ENCODE measurements at regions of chrX and their contacts with region 1.

Region 1: DNA sequence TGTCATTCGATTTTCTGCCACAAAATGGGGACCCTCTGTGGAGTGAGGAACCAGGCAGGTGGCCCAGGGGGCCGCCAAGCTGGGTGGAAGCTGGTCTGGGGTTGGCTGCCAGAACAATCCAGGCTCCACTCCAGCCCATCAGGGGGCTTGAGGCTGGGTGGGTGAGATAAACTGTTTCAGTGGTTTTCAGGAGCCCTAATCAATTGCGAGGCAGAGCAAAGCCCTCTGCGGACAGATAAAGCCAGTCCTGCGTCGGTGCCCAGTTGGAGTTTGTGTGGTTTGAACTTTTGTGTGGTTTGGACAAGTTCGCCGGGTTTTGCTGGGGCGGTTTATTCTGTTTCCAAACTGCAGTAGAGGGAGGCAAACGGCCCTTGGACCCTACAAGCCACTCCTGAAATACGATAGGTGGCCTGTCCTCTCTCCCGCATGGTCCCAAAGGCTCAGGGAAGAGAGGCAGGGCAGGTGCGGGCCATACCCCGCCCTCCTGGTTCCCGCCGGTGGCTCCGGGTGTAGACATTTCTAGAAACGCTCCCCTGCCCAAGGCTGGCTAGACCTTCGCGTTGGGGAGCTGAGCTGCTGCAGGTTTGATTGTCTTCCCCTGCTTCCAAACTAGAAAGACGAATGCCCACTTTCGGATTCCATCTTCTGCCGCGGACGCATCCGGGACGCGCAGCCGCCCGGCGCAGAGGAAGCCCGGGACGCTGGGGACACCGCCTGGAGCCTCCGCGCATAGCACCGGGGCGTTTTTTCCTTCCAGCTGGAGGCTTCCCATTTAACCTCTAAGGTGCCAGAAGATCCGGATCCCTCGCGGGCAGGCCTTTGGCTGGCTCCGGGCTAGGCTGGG is 169.0 kb upstream of the BCOR start:
- DNase-seq: peak; percentile 44
- H3K4me3 Mint-ChIP-seq: peak overlapping the region; percentile 54
- H3K27ac Mint-ChIP-seq: no peak overlapping the region
- H3K4me1 Mint-ChIP-seq: peaks cover 7% of the 10 kb centered on the region
- H3K27me3 Mint-ChIP-seq: peaks cover 11% of the 10 kb centered on the region
- CTCF ChIP-seq: peak; percentile 57

Region 2: GRCh38 chrX:39261446-39262147 is 1005.1 kb before region 1 on chrX:
- CTCF ChIA-PET with region 1: no interaction called
- POLR2A ChIA-PET with region 1: interaction called, 3 read pairs
- intact Hi-C with region 1: loop called (anchors 5 kb)
- DNase-seq: peak; percentile 69
- H3K4me3 Mint-ChIP-seq: no peak overlapping the region
- H3K27ac Mint-ChIP-seq: no peak overlapping the region
- H3K4me1 Mint-ChIP-seq: peaks cover 5% of the 10 kb centered on the region
- H3K27me3 Mint-ChIP-seq: peaks cover under 1% of the 10 kb centered on the region
- CTCF ChIP-seq: peak; percentile 61

Region 3: DNA sequence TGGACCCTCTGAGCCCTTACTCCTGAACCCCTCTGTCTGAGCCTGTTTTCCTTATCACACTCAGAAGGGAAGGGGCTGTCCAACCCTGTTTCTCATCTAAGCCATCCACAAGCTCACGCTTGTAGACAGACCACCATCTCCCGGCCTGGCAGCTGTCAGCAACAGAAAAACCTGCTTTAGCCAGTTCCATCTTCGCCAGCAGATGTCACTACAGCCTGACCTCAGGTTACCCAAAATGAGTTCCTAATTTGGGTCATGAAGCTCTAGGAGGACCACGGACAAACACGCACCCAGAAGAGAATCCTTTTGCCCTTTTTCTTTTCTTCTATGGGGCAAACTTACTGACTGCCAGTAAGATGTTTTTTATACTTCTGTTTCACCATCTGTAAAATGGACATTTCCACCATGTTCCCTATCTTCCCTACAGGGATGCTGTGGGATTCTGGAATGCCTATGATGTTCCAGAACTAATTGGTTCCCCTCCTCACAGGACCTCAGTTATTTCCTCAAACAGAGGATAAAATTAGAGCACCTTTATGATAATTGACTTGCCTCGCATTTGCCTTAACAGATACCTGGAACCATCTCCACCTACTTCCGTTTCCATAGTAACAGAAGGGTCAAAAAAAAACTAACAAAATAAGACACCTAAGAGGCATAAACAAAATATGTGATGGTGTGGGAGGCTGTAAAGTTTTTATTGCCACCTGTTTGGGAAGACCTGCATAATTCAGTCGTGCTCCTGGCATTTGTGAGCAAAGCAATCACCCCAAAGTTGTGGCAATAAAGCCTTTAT is 614.2 kb before region 1 on chrX:
- CTCF ChIA-PET with region 1: no interaction called
- POLR2A ChIA-PET with region 1: no interaction called
- intact Hi-C with region 1: loop called (anchors 2 kb)
- DNase-seq: peak; percentile 40
- H3K4me3 Mint-ChIP-seq: no peak overlapping the region
- H3K27ac Mint-ChIP-seq: no peak overlapping the region
- H3K4me1 Mint-ChIP-seq: no peaks in the 10 kb centered on the region
- H3K27me3 Mint-ChIP-seq: peaks cover 65% of the 10 kb centered on the region
- CTCF ChIP-seq: peak; percentile 38

Region 4: GRCh38 chrX:39796856-39797255 is 469.9 kb before region 1 on chrX:
- CTCF ChIA-PET with region 1: no interaction called
- POLR2A ChIA-PET with region 1: no interaction called
- intact Hi-C with region 1: no loop called
- DNase-seq: peak; percentile 11
- H3K4me3 Mint-ChIP-seq: no peak overlapping the region
- H3K27ac Mint-ChIP-seq: no peak overlapping the region
- H3K4me1 Mint-ChIP-seq: no peaks in the 10 kb centered on the region
- H3K27me3 Mint-ChIP-seq: peaks cover 56% of the 10 kb centered on the region
- CTCF ChIP-seq: no peak

Region 5: DNA sequence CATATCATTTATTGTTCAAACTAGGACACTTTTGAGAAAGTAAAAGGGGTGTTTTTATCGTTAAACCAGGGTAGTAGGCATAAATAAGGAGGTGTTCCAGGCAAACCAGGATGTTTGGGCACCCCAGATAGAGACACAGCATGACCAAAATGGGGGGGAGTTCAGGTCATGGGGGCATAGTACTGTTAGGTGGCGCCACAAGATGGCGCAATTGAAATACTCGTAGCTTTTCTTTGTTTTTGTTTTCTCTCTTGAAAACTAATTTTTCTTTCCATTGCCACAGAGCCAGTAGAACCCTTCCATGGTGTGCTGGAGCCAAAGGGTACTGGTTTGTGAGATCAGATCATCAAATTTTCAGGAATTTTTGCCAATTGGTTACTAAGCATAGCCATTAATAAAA is 452.3 kb before region 1 on chrX:
- CTCF ChIA-PET with region 1: no interaction called
- POLR2A ChIA-PET with region 1: no interaction called
- intact Hi-C with region 1: loop called (anchors 1 kb)
- DNase-seq: peak; percentile 51
- H3K4me3 Mint-ChIP-seq: no peak overlapping the region
- H3K27ac Mint-ChIP-seq: peak overlapping the region; percentile 4
- H3K4me1 Mint-ChIP-seq: peaks cover 15% of the 10 kb centered on the region
- H3K27me3 Mint-ChIP-seq: peaks cover 58% of the 10 kb centered on the region
- CTCF ChIP-seq: peak; percentile 45

Region 6: GRCh38 chrX:40108959-40109287 is 157.8 kb before region 1 on chrX:
- CTCF ChIA-PET with region 1: no interaction called
- POLR2A ChIA-PET with region 1: no interaction called
- intact Hi-C with region 1: loop called (anchors 10 kb)
- DNase-seq: peak; percentile 76
- H3K4me3 Mint-ChIP-seq: peak overlapping the region; percentile 46
- H3K27ac Mint-ChIP-seq: no peak overlapping the region
- H3K4me1 Mint-ChIP-seq: peaks cover 5% of the 10 kb centered on the region
- H3K27me3 Mint-ChIP-seq: peaks cover 26% of the 10 kb centered on the region
- CTCF ChIP-seq: no peak

Region 7: DNA sequence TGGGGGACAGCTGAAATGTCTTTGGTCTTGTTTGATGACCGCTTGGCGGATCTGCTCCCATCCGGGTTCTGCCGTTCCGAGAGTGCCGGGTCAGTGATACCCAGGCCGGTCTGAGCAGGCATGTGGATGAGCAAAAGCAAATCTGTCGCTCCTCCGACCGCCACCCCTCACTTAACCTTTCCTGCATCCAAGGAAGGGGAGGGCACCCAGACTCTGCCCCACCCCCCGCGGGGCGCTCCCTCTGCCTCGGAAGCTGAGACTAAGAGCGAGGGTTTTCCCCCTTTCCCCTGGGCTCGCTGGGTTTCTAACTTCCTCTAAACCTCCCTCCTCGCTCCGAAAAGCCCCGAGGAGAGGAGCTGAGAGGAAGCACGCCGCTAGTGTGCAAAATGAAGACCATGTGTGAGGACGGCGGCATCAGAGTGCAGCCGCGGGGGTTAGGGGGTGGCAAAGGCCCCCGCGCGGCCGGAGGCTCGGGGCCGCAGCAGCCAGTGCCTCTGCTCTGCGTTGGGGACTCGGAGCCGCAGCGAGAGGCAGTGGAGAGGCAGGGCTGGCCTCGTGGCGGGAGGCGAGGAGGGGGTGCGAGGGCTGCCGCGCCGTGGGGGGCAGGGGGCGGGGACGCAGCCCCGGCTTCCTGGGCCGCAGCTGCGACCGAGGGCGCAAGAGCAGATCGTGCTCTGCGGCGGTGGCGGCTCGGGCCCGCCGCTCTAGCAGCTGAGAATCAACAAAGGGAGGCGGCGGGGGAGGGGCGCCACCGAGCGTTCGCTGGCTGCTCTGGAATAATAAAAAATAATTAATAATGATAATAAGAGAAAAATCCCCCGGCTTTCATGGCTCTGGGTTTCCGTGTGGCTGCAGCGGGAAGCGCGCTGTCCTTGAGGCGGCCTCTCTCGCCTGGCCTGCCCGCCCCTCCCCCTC is 113.1 kb before region 1 on chrX:
- CTCF ChIA-PET with region 1: no interaction called
- POLR2A ChIA-PET with region 1: no interaction called
- intact Hi-C with region 1: loop called (anchors 10 kb)
- DNase-seq: peak; percentile 49
- H3K4me3 Mint-ChIP-seq: peak overlapping the region; percentile 62
- H3K27ac Mint-ChIP-seq: no peak overlapping the region
- H3K4me1 Mint-ChIP-seq: no peaks in the 10 kb centered on the region
- H3K27me3 Mint-ChIP-seq: no peaks in the 10 kb centered on the region
- CTCF ChIP-seq: no peak